ENCODE measurements at regions of chr1 and their contacts with region 1.

Region 1: GRCh38 chr1:228664399-228664914 is 70.8 kb upstream of the RHOU start:
- DNase-seq: peak; percentile 65 to 87 (median 77)
- ATAC-seq: no peak
- H3K4me3 ChIP-seq: no peak overlapping the region
- H3K4me3 Mint-ChIP-seq: no peak overlapping the region
- H3K27ac ChIP-seq: no peak overlapping the region
- H3K27ac Mint-ChIP-seq: no peak overlapping the region
- H3K4me1 ChIP-seq: peaks cover 5% of the 10 kb centered on the region
- H3K4me1 Mint-ChIP-seq: no peaks in the 10 kb centered on the region
- H3K27me3 ChIP-seq: no peaks in the 10 kb centered on the region
- H3K27me3 Mint-ChIP-seq: peaks cover 3% of the 10 kb centered on the region
- CTCF ChIP-seq: peak; percentile 91

Region 2: DNA sequence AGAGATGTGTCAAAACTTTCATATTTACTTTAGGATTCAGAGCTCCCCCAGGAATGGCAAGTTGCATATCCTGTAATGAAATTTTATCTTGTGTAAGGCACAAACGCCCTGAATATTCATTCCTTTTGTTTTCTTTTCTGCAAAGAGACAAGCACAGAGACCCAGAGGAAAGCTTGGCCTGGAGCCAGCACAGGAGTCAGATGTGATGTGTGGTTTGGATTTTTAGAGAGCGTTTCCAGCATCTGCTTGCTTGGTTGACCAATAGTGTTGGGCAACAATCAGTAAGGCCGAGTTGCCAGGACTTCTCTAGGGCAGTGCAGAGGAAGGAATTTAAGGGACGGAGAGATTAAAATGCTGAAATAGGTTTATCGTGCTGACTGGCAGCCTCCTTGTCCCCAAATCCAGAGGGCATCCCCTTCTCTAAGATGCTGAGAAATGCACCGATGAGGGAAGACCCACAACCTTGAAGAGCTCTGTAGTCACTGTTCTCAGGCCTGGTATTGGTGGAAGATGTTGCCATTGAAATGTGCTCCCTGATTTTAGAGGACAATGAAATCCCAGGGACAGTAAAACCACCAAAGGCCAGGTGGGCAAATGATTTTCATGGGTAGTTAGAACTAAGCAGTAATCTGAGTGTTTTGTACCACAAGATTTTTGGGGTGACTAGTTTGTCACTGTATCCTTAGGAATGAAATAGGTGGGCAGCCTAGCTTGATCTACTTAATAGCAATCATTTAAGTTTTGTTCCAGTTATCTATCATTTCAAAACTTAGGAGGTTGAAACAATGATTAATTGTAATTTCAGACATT is 33.0 kb after region 1 on chr1:
- CTCF ChIA-PET with region 1: no interaction called
- POLR2A ChIA-PET with region 1: no interaction called
- intact Hi-C with region 1: no loop called
- DNase-seq: peak in 1 of 14 experiments; percentile 10
- ATAC-seq: no peak
- H3K4me3 ChIP-seq: no peak overlapping the region
- H3K4me3 Mint-ChIP-seq: no peak overlapping the region
- H3K27ac ChIP-seq: no peak overlapping the region
- H3K27ac Mint-ChIP-seq: no peak overlapping the region
- H3K4me1 ChIP-seq: peaks cover 10% of the 10 kb centered on the region
- H3K4me1 Mint-ChIP-seq: peaks cover 7% of the 10 kb centered on the region
- H3K27me3 ChIP-seq: no peaks in the 10 kb centered on the region
- H3K27me3 Mint-ChIP-seq: no peaks in the 10 kb centered on the region
- CTCF ChIP-seq: no peak

Region 3: GRCh38 chr1:228765168-228765946 is 100.9 kb after region 1 on chr1:
- CTCF ChIA-PET with region 1: no interaction called
- POLR2A ChIA-PET with region 1: no interaction called
- intact Hi-C with region 1: no loop called
- DNase-seq: peak in 4 of 14 experiments; percentile 26 to 80 (median 40)
- ATAC-seq: no peak
- H3K4me3 ChIP-seq: no peak overlapping the region
- H3K4me3 Mint-ChIP-seq: no peak overlapping the region
- H3K27ac ChIP-seq: peak overlapping the region in 1 of 2 donors; percentile 7
- H3K27ac Mint-ChIP-seq: no peak overlapping the region
- H3K4me1 ChIP-seq: peaks cover 11% of the 10 kb centered on the region
- H3K4me1 Mint-ChIP-seq: peaks cover 8% of the 10 kb centered on the region
- H3K27me3 ChIP-seq: no peaks in the 10 kb centered on the region
- H3K27me3 Mint-ChIP-seq: no peaks in the 10 kb centered on the region
- CTCF ChIP-seq: no peak

Region 4: DNA sequence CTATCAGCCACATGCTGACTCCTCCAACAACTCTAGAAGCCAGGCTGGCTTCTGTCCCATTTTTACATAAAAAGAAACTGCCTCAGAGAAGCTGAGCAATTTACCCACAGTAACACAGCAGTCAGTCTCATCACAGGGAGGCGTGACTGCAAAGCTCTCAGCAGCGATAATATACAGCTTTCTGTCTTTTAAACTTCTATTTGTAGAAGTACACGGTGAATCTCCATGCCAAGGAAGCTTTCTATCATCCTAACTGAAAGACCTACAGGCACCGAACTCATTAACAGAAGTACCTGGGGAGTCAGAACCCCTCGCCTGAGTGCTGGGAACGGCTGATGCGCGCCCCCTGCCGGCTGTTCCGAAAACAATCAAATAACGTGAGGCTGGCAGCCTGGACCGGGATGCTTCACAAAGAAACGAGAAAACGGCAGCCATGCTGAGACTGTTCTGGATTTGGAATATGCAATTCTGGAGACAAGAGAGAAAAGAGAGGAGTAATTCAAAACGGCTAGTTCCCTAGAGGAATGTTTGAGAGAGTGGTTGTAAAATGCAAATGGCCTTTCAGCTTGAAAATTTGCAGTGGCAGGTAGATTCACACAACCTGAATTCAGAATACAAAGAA is 563.0 kb after region 1 on chr1:
- CTCF ChIA-PET with region 1: interaction called, 11 read pairs
- POLR2A ChIA-PET with region 1: no interaction called
- intact Hi-C with region 1: loop called (anchors 1 kb)
- DNase-seq: peak; percentile 69 to 90 (median 81)
- ATAC-seq: peak; percentile 84
- H3K4me3 ChIP-seq: no peak overlapping the region
- H3K4me3 Mint-ChIP-seq: no peak overlapping the region
- H3K27ac ChIP-seq: no peak overlapping the region
- H3K27ac Mint-ChIP-seq: no peak overlapping the region
- H3K4me1 ChIP-seq: peaks cover 13% of the 10 kb centered on the region
- H3K4me1 Mint-ChIP-seq: peaks cover 17% of the 10 kb centered on the region
- H3K27me3 ChIP-seq: no peaks in the 10 kb centered on the region
- H3K27me3 Mint-ChIP-seq: no peaks in the 10 kb centered on the region
- CTCF ChIP-seq: peak; percentile 96

Region 5: GRCh38 chr1:229479660-229480399 is 815.4 kb after region 1 on chr1:
- CTCF ChIA-PET with region 1: interaction called, 5 read pairs
- POLR2A ChIA-PET with region 1: no interaction called
- intact Hi-C with region 1: loop called (anchors 1 to 10 kb)
- DNase-seq: no peak
- ATAC-seq: no peak
- H3K4me3 ChIP-seq: no peak overlapping the region
- H3K4me3 Mint-ChIP-seq: no peak overlapping the region
- H3K27ac ChIP-seq: no peak overlapping the region
- H3K27ac Mint-ChIP-seq: no peak overlapping the region
- H3K4me1 ChIP-seq: no peaks in the 10 kb centered on the region
- H3K4me1 Mint-ChIP-seq: peaks cover 10% of the 10 kb centered on the region
- H3K27me3 ChIP-seq: no peaks in the 10 kb centered on the region
- H3K27me3 Mint-ChIP-seq: no peaks in the 10 kb centered on the region
- CTCF ChIP-seq: no peak

Region 6: DNA sequence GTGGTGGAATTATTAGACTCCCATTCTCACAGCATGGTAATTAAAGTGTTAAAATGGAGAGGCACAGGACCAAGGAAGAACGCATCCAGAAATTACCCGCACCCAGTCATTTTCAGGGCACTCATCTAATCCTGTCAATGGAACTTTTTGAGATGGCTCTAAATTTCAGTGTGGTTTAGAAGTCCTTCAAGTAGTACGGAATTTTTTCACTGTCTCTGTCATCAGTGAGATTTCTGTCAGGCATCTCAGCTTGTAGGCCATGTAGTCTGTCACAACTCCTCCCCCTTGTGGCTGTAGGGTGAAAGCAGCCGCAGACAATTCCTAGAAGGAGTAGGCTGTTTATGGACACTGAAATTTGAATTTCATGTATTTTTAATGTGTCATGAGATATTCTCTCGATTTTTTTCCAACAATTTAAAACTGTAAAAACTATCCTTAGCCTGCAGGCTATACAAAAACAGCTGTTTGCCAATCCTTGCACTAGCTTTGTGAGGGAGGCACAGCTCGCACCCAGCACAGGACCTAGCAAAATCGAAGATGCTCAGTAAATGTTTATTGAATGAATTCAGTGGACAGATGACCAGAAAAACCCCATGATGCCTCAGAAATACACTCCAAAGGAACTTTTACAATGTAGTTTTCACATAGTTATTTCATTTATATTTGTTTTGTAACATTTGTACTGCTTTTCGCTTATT is 850.3 kb after region 1 on chr1:
- CTCF ChIA-PET with region 1: interaction called, 3 read pairs
- POLR2A ChIA-PET with region 1: no interaction called
- intact Hi-C with region 1: loop called (anchors 1 kb)
- DNase-seq: peak; percentile 35 to 85 (median 52)
- ATAC-seq: peak; percentile 100
- H3K4me3 ChIP-seq: no peak overlapping the region
- H3K4me3 Mint-ChIP-seq: no peak overlapping the region
- H3K27ac ChIP-seq: no peak overlapping the region
- H3K27ac Mint-ChIP-seq: peak overlapping the region; percentile 45
- H3K4me1 ChIP-seq: no peaks in the 10 kb centered on the region
- H3K4me1 Mint-ChIP-seq: peaks cover 7% of the 10 kb centered on the region
- H3K27me3 ChIP-seq: no peaks in the 10 kb centered on the region
- H3K27me3 Mint-ChIP-seq: no peaks in the 10 kb centered on the region
- CTCF ChIP-seq: peak; percentile 80

Region 7: DNA sequence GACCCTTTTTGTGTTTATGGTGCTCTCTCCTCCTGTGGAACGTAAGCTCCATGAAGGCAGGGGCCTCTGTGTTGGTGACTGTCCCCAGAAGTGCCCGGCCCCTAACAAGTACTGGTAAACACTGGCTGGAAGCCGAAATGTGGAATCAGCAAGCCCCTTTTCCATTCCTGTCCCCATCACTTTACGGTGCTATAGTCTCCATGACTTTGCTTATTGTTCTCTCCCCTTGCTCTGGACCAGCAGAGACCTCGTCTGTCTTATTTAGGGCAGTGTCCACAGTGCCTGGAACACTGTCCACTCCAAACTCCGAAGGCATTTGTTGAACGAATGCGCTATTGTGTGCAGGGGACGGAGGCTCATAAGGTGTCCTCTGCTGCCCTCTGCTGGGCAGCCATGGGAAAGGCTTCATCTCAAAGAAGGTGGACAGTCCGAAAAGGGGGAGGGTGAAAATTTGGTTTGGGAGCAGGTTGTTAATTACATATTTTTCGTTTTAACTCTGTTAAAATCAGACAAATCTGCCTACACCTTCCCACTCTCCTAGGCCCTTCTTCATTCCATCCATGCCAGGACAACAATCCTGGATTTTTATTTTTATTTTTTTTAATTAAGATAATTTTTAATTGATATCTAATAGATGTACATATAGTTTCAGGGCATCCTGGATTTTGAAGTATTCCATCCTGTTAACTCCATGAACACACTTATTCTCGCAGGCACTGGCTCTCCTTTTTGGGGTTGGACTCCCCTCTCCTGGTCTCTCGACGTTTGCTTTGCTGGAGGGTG is 1646.1 kb after region 1 on chr1:
- CTCF ChIA-PET with region 1: no interaction called
- POLR2A ChIA-PET with region 1: no interaction called
- intact Hi-C with region 1: loop called (anchors 10 kb)
- DNase-seq: peak; percentile 23 to 83 (median 57)
- ATAC-seq: peak; percentile 59
- H3K4me3 ChIP-seq: no peak overlapping the region
- H3K4me3 Mint-ChIP-seq: no peak overlapping the region
- H3K27ac ChIP-seq: no peak overlapping the region
- H3K27ac Mint-ChIP-seq: no peak overlapping the region
- H3K4me1 ChIP-seq: peaks cover 5% of the 10 kb centered on the region
- H3K4me1 Mint-ChIP-seq: peaks cover 4% of the 10 kb centered on the region
- H3K27me3 ChIP-seq: no peaks in the 10 kb centered on the region
- H3K27me3 Mint-ChIP-seq: no peaks in the 10 kb centered on the region
- CTCF ChIP-seq: peak; percentile 98

Measured in CD4-positive, alpha-beta T cell (primary cell).